IMR-90 (cell line): ENCODE measurements at regions of chr11 and their contacts with region 1.

Region 1: DNA sequence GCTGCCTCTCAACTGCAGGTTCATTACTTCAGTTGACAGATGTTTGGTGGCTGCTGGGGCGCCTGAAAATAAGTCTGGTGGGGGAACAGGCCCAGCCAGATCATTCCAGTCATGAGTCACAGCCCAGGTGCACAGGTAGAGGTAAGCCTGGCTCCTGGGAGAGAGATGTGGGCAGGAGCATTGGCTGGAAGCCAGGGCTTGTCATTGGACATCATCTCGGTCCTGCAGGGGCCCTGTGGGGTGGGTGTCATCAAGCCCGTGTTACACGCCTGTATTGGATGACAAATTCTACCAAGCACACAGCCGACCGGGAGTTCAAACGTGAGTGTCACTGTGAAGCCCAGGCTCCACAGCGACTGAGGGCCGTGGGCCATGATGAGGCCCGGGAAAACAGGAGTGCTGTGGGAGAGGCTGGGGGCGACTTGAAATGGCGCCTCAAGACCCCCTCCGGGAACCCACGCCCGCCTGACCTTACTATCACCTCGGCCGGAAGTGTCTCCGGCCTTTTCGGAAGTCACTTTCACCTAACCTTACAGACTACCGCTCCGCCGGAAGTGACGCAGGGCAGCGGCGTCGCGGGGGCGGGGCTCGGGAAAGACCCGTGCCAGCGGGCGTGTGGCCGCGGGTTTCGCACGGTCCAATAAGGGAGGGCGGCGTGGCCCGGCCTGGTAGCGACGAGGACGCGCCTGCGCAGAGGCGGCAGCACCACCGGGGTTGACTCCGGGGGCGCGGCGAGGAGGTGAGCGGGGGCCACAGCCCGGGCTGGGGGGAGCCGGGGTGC is at the start of gene FKBP2:
- DNase-seq: peak; percentile 95
- ATAC-seq: peak; percentile 70
- H3K4me3 ChIP-seq: peak within 1 kb of the TSS; percentile 85
- H3K27ac ChIP-seq: peak within 1 kb of the TSS; percentile 89
- H3K4me1 ChIP-seq: peaks cover 15% of the 10 kb centered on the region
- H3K27me3 ChIP-seq: no peaks in the 10 kb centered on the region
- CTCF ChIP-seq: no peak
- POLR2A ChIP-seq: peak; percentile 84
- RAD21 ChIP-seq: no peak
- total RNA-seq, gene FKBP2: 36.2 and 62.5 TPM in 2 replicates

Region 2: GRCh38 chr11:64185816-64186498 is 54.6 kb before region 1 on chr11 and contains the start of gene STIP1:
- CTCF ChIA-PET with region 1: no interaction called
- POLR2A ChIA-PET with region 1: interaction called, 3 read pairs
- dilution Hi-C with region 1: no loop called
- in situ Hi-C with region 1: no loop called
- intact Hi-C with region 1: loop called (anchors 2 kb)
- DNase-seq: peak; percentile 100
- ATAC-seq: peak; percentile 81
- H3K4me3 ChIP-seq: peak within 1 kb of the TSS; percentile 54
- H3K27ac ChIP-seq: peak within 1 kb of the TSS; percentile 91
- H3K4me1 ChIP-seq: peaks cover 2% of the 10 kb centered on the region; the same call in 1 of the 2 replicates
- H3K27me3 ChIP-seq: no peaks in the 10 kb centered on the region
- CTCF ChIP-seq: peak; percentile 59
- POLR2A ChIP-seq: no peak
- RAD21 ChIP-seq: peak; percentile 23; the same call in 1 of the 2 replicates
- total RNA-seq, gene STIP1: 363 and 489 TPM in 2 replicates

Region 3: DNA sequence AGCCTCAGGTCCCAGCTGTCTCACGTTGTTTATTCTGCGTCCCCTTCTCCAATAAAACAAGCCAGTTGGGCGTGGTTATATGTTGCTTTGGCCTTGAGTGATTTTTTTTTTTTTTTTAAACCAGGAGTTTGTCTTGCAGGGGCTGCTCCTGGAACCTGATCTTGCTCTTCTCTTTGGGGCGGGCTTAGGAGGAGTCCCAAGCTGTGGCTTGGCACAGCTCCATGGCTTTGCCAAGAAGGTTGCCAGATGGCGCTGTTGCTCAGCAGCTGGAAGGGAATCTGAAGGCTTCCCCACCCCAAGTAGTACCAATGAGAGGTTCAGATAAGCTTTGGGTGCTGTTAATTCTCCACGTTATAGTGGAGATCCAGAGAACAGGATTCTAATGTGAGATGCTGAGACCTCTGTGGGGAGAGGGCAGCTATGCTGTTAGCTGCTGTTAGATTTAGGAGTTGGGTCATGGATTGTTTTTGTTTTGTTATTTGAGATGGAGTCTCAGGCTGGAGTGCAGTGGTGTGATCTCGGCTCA is 36.1 kb before region 1 on chr11:
- CTCF ChIA-PET with region 1: interaction called, 8 read pairs
- POLR2A ChIA-PET with region 1: interaction called, 24 read pairs
- dilution Hi-C with region 1: no loop called
- in situ Hi-C with region 1: no loop called
- intact Hi-C with region 1: no loop called
- DNase-seq: peak; percentile 96
- ATAC-seq: peak; percentile 72
- H3K4me3 ChIP-seq: no peak overlapping the region
- H3K27ac ChIP-seq: no peak overlapping the region
- H3K4me1 ChIP-seq: peaks cover 10% of the 10 kb centered on the region
- H3K27me3 ChIP-seq: no peaks in the 10 kb centered on the region
- CTCF ChIP-seq: peak; percentile 96
- POLR2A ChIP-seq: no peak
- RAD21 ChIP-seq: peak; percentile 96